ENCODE measurements at regions of chr17 and their contacts with region 1.

Region 1: GRCh38 chr17:43694077-43694870 is 32.6 kb upstream of the MEOX1 start:
- DNase-seq: peak; percentile 80 to 86
- ATAC-seq: peak; percentile 84
- H3K4me3 ChIP-seq: no peak overlapping the region
- H3K27ac ChIP-seq: peak overlapping the region in 1 of 2 donors; percentile 14
- H3K4me1 ChIP-seq: peaks cover 0 to 2% of the 10 kb centered on the region in 2 donors
- H3K27me3 ChIP-seq: no peaks in the 10 kb centered on the region

Region 2: DNA sequence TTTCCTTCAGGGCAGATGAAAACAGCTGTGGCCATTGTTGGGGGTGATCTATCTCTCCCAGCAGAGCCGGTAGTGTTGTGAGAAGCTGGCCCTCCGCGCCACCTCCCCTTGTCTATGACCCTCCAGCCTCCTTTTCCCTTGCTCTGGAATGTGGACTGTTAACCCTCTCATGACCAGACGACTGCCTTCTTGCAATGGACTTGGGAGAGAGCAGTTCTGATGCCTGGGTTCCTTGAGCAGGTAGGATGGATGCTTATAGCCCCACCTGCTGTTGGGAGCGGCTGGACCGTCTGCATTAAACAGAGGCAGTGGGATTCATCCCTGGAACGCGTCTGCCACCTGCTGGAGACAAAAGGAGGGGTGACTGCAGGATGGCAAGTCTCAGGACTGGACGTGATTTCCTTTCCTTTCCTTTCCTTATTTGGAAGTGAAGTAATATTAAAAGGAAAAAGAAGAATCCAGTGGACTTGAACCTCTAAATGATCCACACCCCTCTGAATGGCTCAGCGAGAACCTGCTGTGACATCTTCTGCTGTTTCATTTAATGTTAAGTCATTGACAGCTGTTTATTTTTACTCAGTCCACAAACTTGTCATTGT is 66.1 kb after region 1 on chr17:
- intact Hi-C with region 1: loop called (anchors 1 kb)
- DNase-seq: peak; percentile 96 to 98
- ATAC-seq: peak; percentile 92
- H3K4me3 ChIP-seq: no peak overlapping the region
- H3K27ac ChIP-seq: no peak overlapping the region
- H3K4me1 ChIP-seq: peaks cover 0 to 2% of the 10 kb centered on the region in 2 donors
- H3K27me3 ChIP-seq: no peaks in the 10 kb centered on the region

Region 3: DNA sequence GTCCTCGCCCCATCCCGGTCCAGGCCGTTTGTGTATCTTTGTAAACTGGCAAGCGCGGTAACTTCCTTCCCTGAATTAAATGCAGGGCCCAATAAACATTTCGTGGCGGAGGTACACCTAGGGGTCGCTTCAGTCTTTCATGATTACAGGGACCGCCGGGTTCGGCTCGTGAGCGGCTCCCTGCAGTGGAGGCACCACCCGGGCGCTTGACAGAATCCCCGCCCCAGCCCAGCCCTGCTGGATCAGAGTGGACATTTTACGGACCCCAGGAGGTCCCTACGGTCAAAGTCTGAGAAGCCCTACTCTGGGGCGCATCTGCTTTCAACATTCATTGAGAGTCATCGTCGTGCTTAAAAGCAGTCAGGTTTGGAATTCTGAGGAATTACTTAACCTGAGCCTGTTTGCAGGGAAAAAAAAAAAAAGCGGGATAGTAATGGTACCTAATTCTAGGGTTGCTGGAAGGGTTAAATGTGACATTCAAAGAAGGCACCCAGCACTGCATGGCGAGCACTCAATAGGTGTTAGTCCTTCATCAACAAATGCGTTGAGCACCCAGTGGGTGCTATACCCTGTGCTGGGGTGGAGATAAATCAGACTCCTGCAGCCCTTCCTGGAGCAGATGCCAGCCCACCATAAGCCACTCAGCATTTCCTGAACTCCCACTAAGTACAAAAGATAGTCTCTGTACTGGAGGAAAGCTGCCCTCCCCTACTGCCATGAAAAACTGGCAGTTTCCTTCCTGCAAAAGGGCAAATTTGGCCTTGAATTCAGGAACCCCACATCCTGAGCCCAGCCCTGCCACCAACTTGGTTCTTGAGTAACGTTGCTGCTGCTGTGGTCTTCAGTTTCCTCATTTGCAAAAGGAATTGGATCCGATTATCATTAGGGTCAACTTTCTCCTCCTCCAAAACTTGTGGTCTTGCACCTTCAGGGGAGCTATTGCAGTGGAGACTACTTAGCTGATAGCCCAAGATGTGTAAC is 85.2 kb after region 1 on chr17:
- intact Hi-C with region 1: no loop called
- DNase-seq: no peak
- ATAC-seq: peak; percentile 21
- H3K4me3 ChIP-seq: peak overlapping the region; percentile 39 to 46
- H3K27ac ChIP-seq: peak overlapping the region in 1 of 2 donors; percentile 55
- H3K4me1 ChIP-seq: peaks cover 0 to 4% of the 10 kb centered on the region in 2 donors
- H3K27me3 ChIP-seq: no peaks in the 10 kb centered on the region

Region 4: GRCh38 chr17:43846221-43846712 is 152.0 kb after region 1 on chr17:
- intact Hi-C with region 1: loop called in 1 of 2 experiments (anchors 10 kb)
- DNase-seq: peak; percentile 90 to 95
- ATAC-seq: peak; percentile 97
- H3K4me3 ChIP-seq: no peak overlapping the region
- H3K27ac ChIP-seq: no peak overlapping the region
- H3K4me1 ChIP-seq: no peaks in the 10 kb centered on the region
- H3K27me3 ChIP-seq: no peaks in the 10 kb centered on the region

Measured in aorta (tissue), 5 donors.